ENCODE measurements at regions of chr22 and their contacts with region 1.

Region 1: DNA sequence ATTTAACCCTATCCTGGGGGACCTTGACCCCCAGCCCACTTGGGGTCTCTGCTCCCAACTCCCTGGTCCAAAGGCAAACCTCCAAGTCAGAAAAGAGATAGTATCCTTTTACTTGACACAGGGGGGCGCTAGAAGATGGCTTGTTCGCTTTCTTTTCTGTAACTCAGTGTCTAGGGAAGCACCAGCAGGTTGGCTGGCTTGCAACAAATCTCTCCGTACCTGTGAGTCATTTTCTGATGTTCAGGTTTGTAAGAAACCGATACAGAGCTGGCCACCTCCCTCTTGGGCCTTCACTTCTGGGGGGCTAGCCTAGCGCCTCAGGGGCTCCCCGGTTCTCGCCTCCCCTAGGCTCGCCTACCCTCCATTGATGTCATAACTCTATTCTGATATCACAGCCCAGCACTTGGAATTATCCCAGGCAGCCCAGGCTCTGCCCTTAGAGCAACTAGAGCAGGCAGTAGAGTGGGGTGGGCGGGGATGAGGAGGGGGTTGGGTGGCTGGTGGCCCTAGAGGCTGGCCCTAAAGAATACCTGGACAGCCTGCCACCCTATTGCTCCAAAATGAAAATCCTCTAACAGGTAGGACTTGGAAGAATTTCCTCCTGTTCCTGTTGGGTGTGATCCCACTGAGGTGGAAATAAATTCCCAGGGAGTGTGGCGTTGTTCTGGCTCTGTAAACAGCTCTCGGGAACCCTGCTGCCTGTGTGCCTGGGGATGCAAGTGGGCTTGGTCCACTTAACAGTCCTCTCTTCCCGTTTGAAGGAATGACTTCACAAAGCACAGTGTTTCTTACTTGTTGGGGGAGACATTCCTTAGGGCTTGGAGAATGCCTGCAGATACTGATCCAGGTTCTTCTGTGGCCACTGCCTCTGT is 69.4 kb downstream of the OSBP2 start:
- DNase-seq: peak; percentile 85
- H3K4me3 Mint-ChIP-seq: no peak overlapping the region
- H3K27ac Mint-ChIP-seq: no peak overlapping the region
- H3K4me1 Mint-ChIP-seq: peaks cover 2% of the 10 kb centered on the region
- H3K27me3 Mint-ChIP-seq: no peaks in the 10 kb centered on the region

Region 2: DNA sequence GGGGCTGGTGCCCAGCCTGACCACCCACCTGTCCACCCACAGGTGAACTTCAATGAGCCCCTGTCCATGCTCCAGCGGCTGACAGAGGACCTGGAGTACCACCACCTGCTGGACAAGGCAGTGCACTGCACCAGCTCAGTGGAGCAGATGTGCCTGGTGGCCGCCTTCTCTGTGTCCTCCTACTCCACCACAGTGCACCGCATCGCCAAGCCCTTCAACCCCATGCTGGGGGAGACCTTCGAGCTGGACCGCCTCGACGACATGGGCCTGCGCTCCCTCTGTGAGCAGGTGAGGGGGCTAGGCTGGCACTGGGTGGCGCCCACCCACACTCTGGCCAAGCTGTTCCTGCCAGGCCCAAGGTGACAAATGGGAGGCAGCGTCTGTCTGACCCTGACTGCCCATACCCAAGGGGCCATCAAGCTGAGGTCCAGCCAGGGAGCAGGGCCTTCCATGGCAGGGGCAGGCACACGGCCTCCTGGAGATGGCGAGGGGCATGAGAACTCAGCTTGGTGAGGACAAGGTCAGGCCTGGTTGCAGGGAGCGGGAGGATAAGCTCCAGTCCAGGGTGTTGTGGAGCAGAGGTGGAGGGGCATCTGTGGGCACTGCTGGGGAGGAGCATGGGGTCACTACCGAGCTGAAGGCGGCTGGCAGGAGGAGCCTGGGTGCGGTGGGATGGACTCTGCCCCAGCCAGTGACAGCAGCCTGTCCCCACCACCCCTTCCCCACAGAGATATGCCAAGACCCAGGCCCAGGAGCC is 126.8 kb after region 1 on chr22:
- intact Hi-C with region 1: loop called (anchors 5 kb)
- DNase-seq: peak; percentile 76
- H3K4me3 Mint-ChIP-seq: no peak overlapping the region
- H3K27ac Mint-ChIP-seq: no peak overlapping the region
- H3K4me1 Mint-ChIP-seq: peaks cover 13% of the 10 kb centered on the region
- H3K27me3 Mint-ChIP-seq: no peaks in the 10 kb centered on the region

Region 3: GRCh38 chr22:30920407-30920806 is 156.4 kb after region 1 on chr22:
- intact Hi-C with region 1: loop called (anchors 1 kb)
- DNase-seq: peak; percentile 95
- H3K4me3 Mint-ChIP-seq: peak overlapping the region; percentile 68
- H3K27ac Mint-ChIP-seq: no peak overlapping the region
- H3K4me1 Mint-ChIP-seq: peaks cover 10% of the 10 kb centered on the region
- H3K27me3 Mint-ChIP-seq: no peaks in the 10 kb centered on the region